Activated CD8-positive, alpha-beta memory T cell treated with anti-CD3 and anti-CD28 coated beads, Interleukin-2, amount 10 ng/mL, durations not matched to agents 7 days and 5 days (primary cell): ENCODE measurements at regions of chr10 and their contacts with region 1.

Region 1: GRCh38 chr10:96642973-96643372 is 56.2 kb upstream of the TM9SF3 start:
- DNase-seq: peak; percentile 89
- ATAC-seq: peak; percentile 83
- H3K4me3 Mint-ChIP-seq: no peak overlapping the region
- H3K27ac Mint-ChIP-seq: no peak overlapping the region
- H3K4me1 Mint-ChIP-seq: peaks cover 24% of the 10 kb centered on the region
- H3K27me3 Mint-ChIP-seq: no peaks in the 10 kb centered on the region

Region 2: GRCh38 chr10:96664563-96664962 is 21.6 kb after region 1 on chr10:
- CTCF ChIA-PET with region 1: interaction called, 12 read pairs
- DNase-seq: peak; percentile 68
- ATAC-seq: peak; percentile 92
- H3K4me3 Mint-ChIP-seq: no peak overlapping the region
- H3K27ac Mint-ChIP-seq: peak overlapping the region; percentile 47
- H3K4me1 Mint-ChIP-seq: peaks cover 42% of the 10 kb centered on the region
- H3K27me3 Mint-ChIP-seq: peaks cover 3% of the 10 kb centered on the region

Region 3: DNA sequence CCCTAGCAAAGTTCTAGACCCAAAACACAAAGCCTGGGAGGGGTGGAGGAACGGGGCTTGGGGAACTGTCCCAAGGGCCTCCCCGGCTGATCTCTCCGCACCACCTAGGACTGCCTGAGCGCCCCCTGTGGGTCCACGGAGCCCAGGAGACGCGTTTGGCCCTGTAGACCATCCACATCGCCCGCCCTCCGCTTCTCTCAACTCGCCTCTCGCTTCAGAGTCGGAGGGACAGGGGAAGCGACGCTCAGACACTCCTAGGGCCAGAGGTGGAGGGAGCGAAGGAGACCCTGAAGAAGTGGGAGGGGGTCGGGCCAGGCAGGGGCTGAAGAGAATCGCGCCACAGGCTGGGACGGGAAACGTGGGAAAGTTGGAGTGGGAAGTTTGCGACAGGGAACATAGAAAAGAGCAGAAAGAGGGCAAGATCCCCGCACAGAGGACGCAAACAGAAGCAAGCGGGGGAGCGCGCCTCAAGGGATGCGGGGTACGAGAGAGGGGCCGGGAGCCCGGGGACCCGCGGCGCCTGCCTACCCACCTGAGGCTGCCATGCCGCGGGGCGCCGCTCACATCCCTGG is 77.0 kb after region 1 on chr10:
- CTCF ChIA-PET with region 1: interaction called, 18 read pairs
- DNase-seq: peak; percentile 76
- ATAC-seq: peak; percentile 68
- H3K4me3 Mint-ChIP-seq: peak overlapping the region; percentile 98
- H3K27ac Mint-ChIP-seq: peak overlapping the region; percentile 85
- H3K4me1 Mint-ChIP-seq: peaks cover 39% of the 10 kb centered on the region
- H3K27me3 Mint-ChIP-seq: no peaks in the 10 kb centered on the region

Region 4: GRCh38 chr10:96830511-96831199 is 187.7 kb after region 1 on chr10:
- CTCF ChIA-PET with region 1: interaction called, 17 read pairs
- DNase-seq: peak; percentile 89
- ATAC-seq: no peak
- H3K4me3 Mint-ChIP-seq: peak overlapping the region; percentile 62
- H3K27ac Mint-ChIP-seq: peak overlapping the region; percentile 80
- H3K4me1 Mint-ChIP-seq: peaks cover 37% of the 10 kb centered on the region
- H3K27me3 Mint-ChIP-seq: no peaks in the 10 kb centered on the region

Region 5: DNA sequence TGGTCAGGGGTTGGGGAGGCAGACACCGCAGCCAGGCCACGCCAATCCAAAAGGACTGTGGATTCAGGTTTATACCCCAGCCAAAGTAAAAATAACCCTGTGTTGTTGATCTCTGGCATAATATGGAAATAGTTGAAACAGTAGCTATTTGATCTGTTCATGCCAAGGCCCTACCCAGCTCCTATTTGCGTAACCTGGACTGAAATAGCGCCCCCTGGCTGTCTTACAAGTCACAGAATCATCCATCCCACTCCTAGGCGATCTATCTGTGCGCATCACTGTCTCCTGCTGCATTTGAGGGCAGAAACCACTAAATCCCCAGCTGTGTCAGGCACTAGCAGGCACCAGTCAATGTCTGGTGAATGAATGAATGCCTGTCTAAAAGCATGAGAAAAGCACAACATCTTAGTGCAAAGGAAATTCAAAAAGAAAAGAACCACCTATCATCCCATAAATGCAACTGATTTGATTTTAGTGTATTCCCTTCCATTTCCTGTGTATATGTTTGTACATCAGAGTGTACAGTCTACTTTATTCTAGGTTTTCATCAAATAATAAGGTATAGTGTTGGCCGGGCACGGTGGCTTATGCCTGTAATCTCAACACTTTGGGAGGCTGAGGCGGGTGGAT is 382.8 kb after region 1 on chr10:
- CTCF ChIA-PET with region 1: interaction called, 20 read pairs
- DNase-seq: peak; percentile 69
- ATAC-seq: peak; percentile 77
- H3K4me3 Mint-ChIP-seq: no peak overlapping the region
- H3K27ac Mint-ChIP-seq: no peak overlapping the region
- H3K4me1 Mint-ChIP-seq: peaks cover 16% of the 10 kb centered on the region
- H3K27me3 Mint-ChIP-seq: peaks cover 20% of the 10 kb centered on the region